Activated B cell treated with CpG ODN at 0.5 μM for 24 hours (primary cell): ENCODE measurements at regions of chr4 and their contacts with region 1.

Region 1: GRCh38 chr4:6640292-6641163 is at the start of gene MRFAP1:
- DNase-seq: peak; percentile 91
- ATAC-seq: peak; percentile 84
- H3K4me3 Mint-ChIP-seq: peak within 1 kb of the TSS; percentile 99
- H3K27ac Mint-ChIP-seq: peak within 1 kb of the TSS; percentile 100
- H3K4me1 Mint-ChIP-seq: peaks cover 36% of the 10 kb centered on the region
- H3K27me3 Mint-ChIP-seq: no peaks in the 10 kb centered on the region
- CTCF ChIP-seq: no peak
- total RNA-seq, gene MRFAP1: 93.8 and 93.9 TPM in 2 replicates

Region 2: GRCh38 chr4:6574747-6575502 is 65.6 kb before region 1 on chr4 and contains the start of gene MAN2B2:
- CTCF ChIA-PET with region 1: no interaction called
- POLR2A ChIA-PET with region 1: interaction called, 30 read pairs
- intact Hi-C with region 1: loop called (anchors 1 kb)
- DNase-seq: peak; percentile 86
- ATAC-seq: peak; percentile 96
- H3K4me3 Mint-ChIP-seq: peak within 1 kb of the TSS; percentile 88
- H3K27ac Mint-ChIP-seq: peak within 1 kb of the TSS; percentile 74
- H3K4me1 Mint-ChIP-seq: peaks cover 14% of the 10 kb centered on the region
- H3K27me3 Mint-ChIP-seq: no peaks in the 10 kb centered on the region
- CTCF ChIP-seq: no peak
- total RNA-seq, gene MAN2B2: 24.2 and 24.7 TPM in 2 replicates

Region 3: DNA sequence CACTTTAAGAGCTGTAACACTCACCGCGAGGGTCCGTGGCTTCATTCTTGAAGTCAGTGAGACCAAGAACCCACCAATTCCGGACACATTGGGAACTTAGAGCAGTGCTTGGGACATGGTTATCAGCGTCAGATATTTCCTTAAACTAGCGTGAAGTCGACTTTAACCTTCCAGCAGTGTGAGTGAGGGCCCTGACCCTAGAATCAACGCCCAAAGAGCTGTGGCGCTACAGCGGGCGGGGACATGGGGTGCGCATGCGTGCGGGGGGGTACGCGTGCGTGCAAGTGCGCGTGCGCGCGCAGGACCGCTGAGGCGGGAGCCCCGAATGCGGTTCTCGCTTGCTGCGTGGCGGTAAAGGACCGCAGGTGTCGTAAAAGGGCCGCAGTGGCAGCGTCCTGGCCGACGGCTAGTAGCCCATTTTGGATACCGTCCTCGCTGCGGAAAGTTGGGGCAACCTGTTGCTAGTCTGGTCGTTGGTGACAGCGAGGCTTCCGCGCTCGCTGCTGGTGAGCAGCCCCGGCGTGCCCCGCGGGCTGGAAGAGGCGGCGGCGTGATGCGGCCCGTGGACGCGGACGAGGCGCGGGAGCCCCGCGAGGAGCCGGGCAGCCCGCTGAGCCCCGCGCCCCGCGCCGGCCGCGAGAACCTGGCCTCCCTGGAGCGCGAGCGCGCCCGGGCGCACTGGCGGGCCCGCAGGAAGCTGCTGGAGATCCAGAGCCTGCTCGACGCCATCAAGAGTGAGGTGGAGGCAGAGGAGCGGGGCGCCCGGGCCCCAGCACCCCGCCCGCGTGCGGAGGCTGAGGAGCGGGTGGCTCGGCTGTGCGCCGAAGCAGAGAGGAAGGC is 33.4 kb after region 1 on chr4:
- CTCF ChIA-PET with region 1: no interaction called
- POLR2A ChIA-PET with region 1: interaction called, 118 read pairs
- intact Hi-C with region 1: loop called (anchors 1 kb)
- DNase-seq: peak; percentile 93
- ATAC-seq: peak; percentile 88
- H3K4me3 Mint-ChIP-seq: peak overlapping the region; percentile 91
- H3K27ac Mint-ChIP-seq: peak overlapping the region; percentile 96
- H3K4me1 Mint-ChIP-seq: peaks cover 55% of the 10 kb centered on the region
- H3K27me3 Mint-ChIP-seq: no peaks in the 10 kb centered on the region
- CTCF ChIP-seq: no peak

Region 4: GRCh38 chr4:6815029-6815836 is 174.7 kb after region 1 on chr4:
- CTCF ChIA-PET with region 1: no interaction called
- POLR2A ChIA-PET with region 1: interaction called, 12 read pairs
- intact Hi-C with region 1: no loop called
- DNase-seq: no peak
- ATAC-seq: no peak
- H3K4me3 Mint-ChIP-seq: no peak overlapping the region
- H3K27ac Mint-ChIP-seq: no peak overlapping the region
- H3K4me1 Mint-ChIP-seq: peaks cover 28% of the 10 kb centered on the region
- H3K27me3 Mint-ChIP-seq: no peaks in the 10 kb centered on the region
- CTCF ChIP-seq: no peak

Region 5: DNA sequence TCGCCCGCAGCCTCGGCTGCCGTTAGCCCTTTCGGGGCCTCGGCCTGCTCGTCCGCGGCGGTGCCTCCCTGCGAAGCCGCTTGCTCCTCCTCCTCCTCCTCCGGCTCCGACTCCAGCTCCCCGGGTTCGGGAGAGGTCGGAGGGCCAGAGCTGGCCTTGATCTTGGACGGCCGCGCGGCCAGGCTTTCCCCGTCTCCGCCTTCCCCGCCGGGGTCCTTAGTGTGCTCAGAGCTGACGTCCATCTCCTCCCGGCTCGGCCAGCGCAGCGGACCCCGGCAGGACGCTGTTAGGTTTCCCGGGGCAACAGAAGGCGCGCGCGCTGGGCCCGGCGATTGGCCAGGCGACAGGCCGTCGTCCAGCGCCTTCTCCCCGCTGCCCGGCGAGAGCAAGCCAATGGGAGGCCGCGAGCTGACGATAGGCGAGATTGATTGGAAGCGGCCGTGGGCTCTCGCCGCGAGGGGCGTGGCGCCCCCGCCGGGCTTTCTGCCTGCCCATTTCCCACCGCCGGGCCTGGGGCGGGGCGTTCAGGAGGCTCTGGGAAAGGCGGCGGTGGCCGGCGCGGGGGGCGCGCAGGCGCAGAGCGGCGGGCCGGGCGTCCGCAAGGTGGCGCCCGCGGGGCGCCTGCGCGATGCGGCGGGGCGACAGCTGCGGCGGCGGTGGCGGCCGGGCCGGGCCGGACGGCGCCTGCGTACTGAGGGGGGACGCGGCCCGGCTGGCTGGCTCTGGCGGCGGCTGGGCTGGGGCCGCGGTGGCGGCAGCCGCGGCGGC is 402.4 kb after region 1 on chr4 and contains the start of gene TADA2B:
- CTCF ChIA-PET with region 1: no interaction called
- POLR2A ChIA-PET with region 1: interaction called, 5 read pairs
- intact Hi-C with region 1: loop called (anchors 1 kb)
- DNase-seq: peak; percentile 96
- ATAC-seq: peak; percentile 87
- H3K4me3 Mint-ChIP-seq: peak within 1 kb of the TSS; percentile 93
- H3K27ac Mint-ChIP-seq: peak within 1 kb of the TSS; percentile 85
- H3K4me1 Mint-ChIP-seq: peaks cover 54% of the 10 kb centered on the region
- H3K27me3 Mint-ChIP-seq: no peaks in the 10 kb centered on the region
- CTCF ChIP-seq: no peak
- total RNA-seq, gene TADA2B: 26.7 and 31.8 TPM in 2 replicates